Mammary epithelial cell (primary cell): ENCODE measurements at regions of chr19 and their contacts with region 1.

Region 1: DNA sequence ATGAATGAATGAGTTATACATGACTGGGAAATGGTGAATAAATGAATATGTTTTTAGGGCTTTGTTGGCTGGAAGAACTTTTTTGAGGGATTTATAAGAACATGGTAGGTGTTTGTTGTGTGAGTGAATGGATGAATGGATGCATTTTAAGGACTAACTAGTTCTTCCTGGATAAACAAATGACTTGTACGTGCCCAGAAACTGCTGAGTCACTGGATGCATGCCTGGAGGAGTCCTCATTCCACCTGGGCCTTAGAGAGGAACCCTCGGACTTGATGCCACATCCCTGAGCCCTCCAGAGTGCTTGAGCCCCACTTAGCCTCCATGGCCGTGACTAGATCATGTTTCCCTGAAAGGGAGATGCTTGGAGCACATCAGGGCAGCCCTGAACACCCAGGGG is 153.4 kb downstream of the DPF1 start:
- DNase-seq: peak; percentile 71
- H3K4me3 ChIP-seq: no peak overlapping the region
- H3K27ac ChIP-seq: peak overlapping the region; percentile 14
- H3K4me1 ChIP-seq: peaks cover 9% of the 10 kb centered on the region
- H3K27me3 ChIP-seq: no peaks in the 10 kb centered on the region
- CTCF ChIP-seq: no peak

Region 2: GRCh38 chr19:38004521-38005223 is 65.9 kb before region 1 on chr19:
- CTCF ChIA-PET with region 1: no interaction called
- dilution Hi-C with region 1: no loop called
- in situ Hi-C with region 1: no loop called
- intact Hi-C with region 1: loop called (anchors 2 kb)
- DNase-seq: peak; percentile 95
- H3K4me3 ChIP-seq: peak overlapping the region; percentile 24 to 44 (median 38)
- H3K27ac ChIP-seq: peak overlapping the region; percentile 94
- H3K4me1 ChIP-seq: peaks cover 36% of the 10 kb centered on the region
- H3K27me3 ChIP-seq: no peaks in the 10 kb centered on the region
- CTCF ChIP-seq: no peak